GM10248 (cell line): ENCODE measurements at regions of chr10 and their contacts with region 1.

Region 1: DNA sequence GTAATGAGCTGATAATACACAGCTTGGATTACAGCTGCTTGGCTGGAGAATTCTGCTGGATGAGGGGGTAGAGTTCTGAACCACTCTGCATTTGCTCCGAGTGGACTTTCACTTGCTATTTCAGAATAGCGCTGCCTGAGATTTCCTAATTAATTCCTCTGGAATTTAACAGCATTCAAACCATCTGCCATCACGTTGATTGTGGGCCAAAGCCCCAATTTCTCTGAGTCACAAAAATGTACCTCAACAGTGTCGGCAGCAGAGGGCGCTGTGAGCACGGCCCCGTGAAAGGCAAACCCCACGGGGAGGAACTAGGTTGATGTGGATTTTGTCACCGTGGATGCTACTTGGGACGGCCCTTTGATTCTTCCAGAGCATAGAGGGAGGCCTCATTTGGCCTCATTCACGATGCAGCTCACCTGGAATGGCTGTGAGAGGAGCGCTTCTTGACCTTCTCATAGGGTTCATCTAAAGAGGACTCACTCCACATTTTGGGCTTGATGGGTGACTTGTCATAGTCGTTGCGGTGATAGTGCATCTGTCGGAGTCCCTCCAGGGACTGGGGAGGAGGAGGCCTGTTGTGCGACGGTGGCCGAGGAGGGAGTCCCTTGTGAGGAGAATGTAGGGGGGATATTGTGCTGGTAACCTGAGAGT is 73.3 kb downstream of the PRPF18 start:
- DNase-seq: peak; percentile 82
- CTCF ChIP-seq: peak; percentile 72

Region 2: GRCh38 chr10:13470270-13470669 is 189.8 kb before region 1 on chr10:
- CTCF ChIA-PET with region 1: no interaction called
- POLR2A ChIA-PET with region 1: no interaction called
- DNase-seq: no peak
- CTCF ChIP-seq: no peak

Region 3: GRCh38 chr10:13673156-13673555 is 13.1 kb after region 1 on chr10:
- CTCF ChIA-PET with region 1: interaction called, 16 read pairs
- POLR2A ChIA-PET with region 1: no interaction called
- DNase-seq: no peak
- CTCF ChIP-seq: no peak

Region 4: GRCh38 chr10:13678101-13678843 is 18.2 kb after region 1 on chr10:
- CTCF ChIA-PET with region 1: interaction called, 14 read pairs
- POLR2A ChIA-PET with region 1: no interaction called
- DNase-seq: no peak
- CTCF ChIP-seq: no peak

Region 5: GRCh38 chr10:13724484-13724883 is 64.5 kb after region 1 on chr10:
- CTCF ChIA-PET with region 1: interaction called, 10 read pairs
- POLR2A ChIA-PET with region 1: no interaction called
- DNase-seq: no peak
- CTCF ChIP-seq: no peak

Region 6: DNA sequence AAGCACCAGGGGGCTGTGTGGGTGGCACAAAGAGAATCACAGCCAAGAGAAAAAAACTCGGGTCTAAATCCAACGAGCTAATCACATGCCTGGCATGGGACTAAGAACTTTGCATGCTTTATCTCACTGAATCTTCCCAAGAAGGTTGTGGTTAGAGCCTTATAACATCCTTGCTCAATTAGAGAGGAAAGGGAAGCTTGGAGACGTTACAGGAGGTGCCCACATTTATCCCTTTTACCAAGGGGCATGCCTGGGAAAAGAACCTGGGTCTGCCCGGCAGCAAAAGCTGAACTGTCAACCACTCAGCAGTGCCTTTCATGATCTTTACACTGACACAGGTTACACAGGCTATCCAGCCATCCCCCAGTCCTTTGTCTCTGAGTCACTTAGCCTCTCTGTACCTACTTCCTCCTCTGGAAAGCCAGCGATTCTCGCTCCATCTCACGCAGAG is 116.9 kb after region 1 on chr10:
- CTCF ChIA-PET with region 1: interaction called, 40 read pairs
- POLR2A ChIA-PET with region 1: no interaction called
- DNase-seq: peak; percentile 53
- CTCF ChIP-seq: no peak

Region 7: GRCh38 chr10:13787015-13787421 is 127.0 kb after region 1 on chr10:
- CTCF ChIA-PET with region 1: interaction called, 26 read pairs
- POLR2A ChIA-PET with region 1: no interaction called
- DNase-seq: peak; percentile 76
- CTCF ChIP-seq: no peak

Region 8: GRCh38 chr10:14114791-14115190 is 454.8 kb after region 1 on chr10:
- CTCF ChIA-PET with region 1: no interaction called
- POLR2A ChIA-PET with region 1: no interaction called
- DNase-seq: no peak
- CTCF ChIP-seq: no peak